Ascending aorta (tissue), 2 donors: ENCODE measurements at regions of chr3 and their contacts with region 1.

Region 1: GRCh38 chr3:77348231-77348855 is 308.4 kb downstream of the ROBO2 start:
- DNase-seq: no peak
- H3K4me3 ChIP-seq: no peak overlapping the region
- H3K27ac ChIP-seq: no peak overlapping the region
- H3K4me1 ChIP-seq: no peaks in the 10 kb centered on the region
- H3K27me3 ChIP-seq: no peaks in the 10 kb centered on the region
- CTCF ChIP-seq: peak in 1 of 3 experiments; percentile 22

Region 2: DNA sequence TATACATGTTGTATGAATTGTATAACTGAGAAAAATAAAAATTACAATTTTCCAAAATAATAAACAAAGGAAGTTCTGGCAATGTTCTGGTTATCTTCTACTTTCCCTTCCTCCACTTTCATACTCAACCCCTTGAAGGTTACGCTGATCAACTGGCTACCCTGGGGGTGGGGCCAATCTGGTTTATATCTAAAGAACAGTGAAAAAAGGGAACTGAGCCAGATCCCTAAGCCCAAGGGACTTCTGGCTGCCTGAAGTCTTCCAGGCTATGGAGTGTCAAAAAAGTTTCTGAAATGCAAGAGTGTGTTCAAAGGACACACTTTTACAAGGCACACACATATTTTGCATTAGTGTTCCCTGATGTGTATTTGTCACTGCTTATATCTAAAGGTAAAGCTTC is 1827.5 kb after region 1 on chr3:
- intact Hi-C with region 1: loop called (anchors 10 kb)
- DNase-seq: no peak
- H3K4me3 ChIP-seq: no peak overlapping the region
- H3K27ac ChIP-seq: no peak overlapping the region
- H3K4me1 ChIP-seq: no peaks in the 10 kb centered on the region
- H3K27me3 ChIP-seq: no peaks in the 10 kb centered on the region
- CTCF ChIP-seq: no peak